ENCODE measurements at regions of chr3 and their contacts with region 1.

Region 1: DNA sequence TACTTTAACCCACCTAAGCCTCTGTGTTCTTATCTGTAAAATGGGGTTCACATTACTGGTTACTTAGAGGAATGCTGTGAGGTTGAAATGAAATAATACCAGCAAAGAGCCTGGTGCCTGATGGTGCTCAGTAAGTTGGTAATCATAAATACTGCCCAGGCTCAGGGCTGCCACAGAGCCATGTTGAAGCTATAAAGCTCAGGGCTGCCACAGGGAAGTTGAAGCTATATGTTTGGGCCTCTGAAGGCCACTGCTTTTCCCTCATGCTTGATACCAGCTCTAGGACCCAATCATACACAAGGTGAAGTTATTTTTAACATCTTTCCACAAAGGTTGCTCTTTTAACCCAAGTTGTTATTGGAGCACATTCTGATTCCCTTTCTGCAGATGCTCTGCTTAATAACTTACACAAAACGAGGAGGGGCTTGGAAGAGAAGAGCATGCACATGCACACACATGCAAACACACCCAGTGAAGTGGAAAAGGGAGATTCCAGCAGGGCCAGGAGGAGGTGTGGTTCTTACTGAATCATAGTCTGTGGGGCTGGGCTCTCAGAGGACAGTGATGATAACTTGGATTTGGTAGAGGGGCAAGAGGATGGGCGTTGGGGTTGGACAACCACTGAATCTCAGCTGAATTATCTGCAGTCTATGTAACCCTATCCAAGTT is 17.4 kb downstream of the PARP14 start:
- DNase-seq: peak; percentile 48
- ATAC-seq: peak; percentile 95
- H3K4me3 Mint-ChIP-seq: peak overlapping the region; percentile 52
- H3K27ac Mint-ChIP-seq: peak overlapping the region; percentile 92
- H3K4me1 Mint-ChIP-seq: peaks cover 94% of the 10 kb centered on the region
- H3K27me3 Mint-ChIP-seq: no peaks in the 10 kb centered on the region
- CTCF ChIP-seq: no peak

Region 2: GRCh38 chr3:122719273-122719921 is 21.3 kb after region 1 on chr3:
- CTCF ChIA-PET with region 1: interaction called, 5 read pairs
- POLR2A ChIA-PET with region 1: interaction called, 3 read pairs
- intact Hi-C with region 1: loop called (anchors 2 kb)
- DNase-seq: no peak
- ATAC-seq: no peak
- H3K4me3 Mint-ChIP-seq: no peak overlapping the region
- H3K27ac Mint-ChIP-seq: peak overlapping the region; percentile 14
- H3K4me1 Mint-ChIP-seq: peaks cover 27% of the 10 kb centered on the region
- H3K27me3 Mint-ChIP-seq: no peaks in the 10 kb centered on the region
- CTCF ChIP-seq: no peak

Region 3: DNA sequence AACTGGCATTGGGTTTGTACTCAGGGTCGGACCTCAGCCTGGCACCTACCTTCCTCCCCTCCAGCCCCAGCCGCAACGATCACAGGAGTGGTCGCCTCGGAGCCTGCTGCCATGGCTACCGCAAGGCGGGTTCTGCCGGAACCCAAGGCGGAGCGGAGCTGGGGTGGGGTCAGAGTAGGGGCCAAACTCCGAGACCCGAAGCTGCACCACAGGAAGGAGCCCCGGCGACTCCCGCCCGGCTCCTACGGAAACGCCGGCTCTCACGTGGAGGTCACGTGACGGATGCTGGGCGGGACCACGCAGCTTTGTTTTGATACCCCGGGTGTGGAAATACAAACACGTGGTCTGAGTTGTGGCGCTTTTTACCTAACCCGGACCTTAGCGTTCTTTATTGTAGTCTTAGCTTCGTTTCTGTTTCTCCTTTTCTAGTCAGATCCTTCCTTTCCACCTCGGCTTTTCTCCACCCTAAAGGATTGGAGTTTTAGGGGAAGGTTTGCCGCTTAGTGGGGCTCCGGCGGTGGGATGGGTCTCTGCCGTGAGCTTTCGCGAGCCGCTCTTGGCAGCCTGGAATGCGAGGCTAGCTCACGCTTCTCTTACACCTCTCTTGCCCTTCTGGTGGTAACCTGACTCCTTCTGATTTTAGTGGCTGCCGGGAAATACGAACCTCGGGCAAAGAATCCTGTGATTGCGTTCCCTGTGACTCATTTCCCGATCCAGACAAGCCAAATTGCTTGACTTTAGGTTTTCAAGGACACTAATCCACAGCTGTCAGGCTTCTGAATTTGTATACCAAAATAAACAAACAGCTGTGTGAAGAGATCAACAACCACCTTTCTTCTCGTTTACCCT is 95.7 kb after region 1 on chr3 and contains the start of gene HSPBAP1:
- CTCF ChIA-PET with region 1: no interaction called
- POLR2A ChIA-PET with region 1: interaction called, 7 read pairs
- intact Hi-C with region 1: loop called (anchors 1 kb)
- DNase-seq: peak; percentile 91
- ATAC-seq: peak; percentile 67
- H3K4me3 Mint-ChIP-seq: no peak within 1 kb of the TSS
- H3K27ac Mint-ChIP-seq: peak within 1 kb of the TSS; percentile 86
- H3K4me1 Mint-ChIP-seq: peaks cover 30% of the 10 kb centered on the region
- H3K27me3 Mint-ChIP-seq: no peaks in the 10 kb centered on the region
- CTCF ChIP-seq: no peak
- total RNA-seq, gene HSPBAP1: 18.1 and 20.6 TPM in 2 replicates

Region 4: GRCh38 chr3:123314359-123315270 is 616.5 kb after region 1 on chr3:
- CTCF ChIA-PET with region 1: no interaction called
- POLR2A ChIA-PET with region 1: no interaction called
- intact Hi-C with region 1: no loop called
- DNase-seq: no peak
- ATAC-seq: no peak
- H3K4me3 Mint-ChIP-seq: no peak overlapping the region
- H3K27ac Mint-ChIP-seq: no peak overlapping the region
- H3K4me1 Mint-ChIP-seq: no peaks in the 10 kb centered on the region
- H3K27me3 Mint-ChIP-seq: peaks cover 12% of the 10 kb centered on the region
- CTCF ChIP-seq: no peak

Measured in activated B cell treated with CpG ODN at 0.5 μM for 24 hours (primary cell).